Stomach (tissue), 19 donors: ENCODE measurements at regions of chr7 and their contacts with region 1.

Region 1: GRCh38 chr7:128862571-128863432 is at the start of gene ATP6V1F:
- DNase-seq: peak; percentile 99
- H3K4me3 ChIP-seq: peak within 1 kb of the TSS; percentile 79 to 98 (median 86)
- H3K27ac ChIP-seq: peak within 1 kb of the TSS; percentile 67 to 89 (median 81)
- H3K4me1 ChIP-seq: peaks cover 27 to 60% (median 41%) of the 10 kb centered on the region in 4 donors
- H3K27me3 ChIP-seq: no peaks in the 10 kb centered on the region
- CTCF ChIP-seq: no peak
- EP300 ChIP-seq: no peak
- POLR2A ChIP-seq: no peak
- total RNA-seq, gene ATP6V1F: 2.0 to 86.2 (median 47.5) TPM

Region 2: GRCh38 chr7:128739048-128739962 is 123.5 kb before region 1 on chr7 and contains the start of gene CALU:
- intact Hi-C with region 1: loop called (anchors 10 kb)
- DNase-seq: peak; percentile 97 to 99
- H3K4me3 ChIP-seq: peak within 1 kb of the TSS; percentile 63 to 94 (median 83)
- H3K27ac ChIP-seq: peak within 1 kb of the TSS; percentile 91 to 97 (median 92)
- H3K4me1 ChIP-seq: peaks cover 23 to 55% (median 43%) of the 10 kb centered on the region in 4 donors
- H3K27me3 ChIP-seq: no peaks in the 10 kb centered on the region
- CTCF ChIP-seq: no peak
- EP300 ChIP-seq: no peak
- POLR2A ChIP-seq: peak in 2 of 4 donors; percentile 63 to 75
- total RNA-seq, gene CALU: 10.1 to 270 (median 54.5) TPM